ENCODE measurements at regions of chr6 and their contacts with region 1.

Region 1: DNA sequence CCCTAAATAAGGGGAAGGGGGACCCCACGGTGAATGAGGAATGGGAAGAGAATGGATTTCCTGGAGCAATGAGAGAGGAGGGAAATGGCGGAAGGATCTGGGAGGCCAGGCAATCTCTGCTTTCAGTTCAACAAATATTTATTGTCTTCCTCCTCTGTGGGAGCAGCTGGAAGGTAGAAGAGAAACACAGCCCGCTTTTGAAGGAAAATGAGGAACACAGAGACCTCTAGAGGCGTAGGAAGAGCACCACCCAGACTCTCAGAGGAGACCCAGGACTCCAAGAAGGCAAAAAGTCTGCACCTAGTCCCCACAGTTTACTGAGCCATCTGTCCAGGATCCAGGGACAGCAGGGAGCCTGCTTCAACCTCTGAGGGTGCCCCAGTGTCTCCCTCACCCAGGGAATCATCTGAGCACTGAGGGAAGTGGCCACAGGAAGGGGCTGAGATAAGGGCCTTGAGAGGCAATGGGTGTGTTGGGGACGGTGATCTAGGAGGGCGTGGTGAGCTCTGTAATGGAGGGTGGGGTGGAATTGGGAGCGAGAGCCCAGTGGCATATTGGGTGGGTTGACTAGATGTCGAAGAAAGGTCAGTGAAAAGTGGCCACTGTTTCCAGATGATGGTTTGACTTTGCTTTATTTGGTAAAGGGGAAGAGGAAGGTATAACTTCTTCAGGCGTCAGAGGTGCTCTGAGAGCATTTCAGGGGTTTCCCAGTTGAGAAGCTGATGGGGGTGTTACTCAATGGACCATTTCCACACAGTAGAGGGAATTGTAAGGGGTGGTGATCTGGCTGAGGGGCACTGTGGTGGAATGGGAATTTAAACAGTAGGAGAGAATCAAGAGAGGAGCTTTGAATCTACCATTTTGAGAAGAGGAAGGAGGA is 610 bp downstream of the PSORS1C1 start:
- DNase-seq: no peak
- H3K4me3 ChIP-seq: peak overlapping the region; percentile 36
- H3K27me3 ChIP-seq: 0 out of 2 replicates have a peak, but pooled peaks cover 2% of the 10 kb centered on the region
- CTCF ChIP-seq: peak; percentile 52

Region 2: GRCh38 chr6:30672445-30673253 is 442.6 kb before region 1 on chr6 and contains the start of gene DHX16:
- CTCF ChIA-PET with region 1: no interaction called
- POLR2A ChIA-PET with region 1: interaction called, 10 read pairs
- DNase-seq: peak; percentile 85
- H3K4me3 ChIP-seq: peak within 1 kb of the TSS; percentile 88
- H3K27me3 ChIP-seq: no peaks in the 10 kb centered on the region
- CTCF ChIP-seq: peak; percentile 88
- polyA plus RNA-seq, gene DHX16: 25.1 and 44.5 TPM in 2 replicates

Region 3: DNA sequence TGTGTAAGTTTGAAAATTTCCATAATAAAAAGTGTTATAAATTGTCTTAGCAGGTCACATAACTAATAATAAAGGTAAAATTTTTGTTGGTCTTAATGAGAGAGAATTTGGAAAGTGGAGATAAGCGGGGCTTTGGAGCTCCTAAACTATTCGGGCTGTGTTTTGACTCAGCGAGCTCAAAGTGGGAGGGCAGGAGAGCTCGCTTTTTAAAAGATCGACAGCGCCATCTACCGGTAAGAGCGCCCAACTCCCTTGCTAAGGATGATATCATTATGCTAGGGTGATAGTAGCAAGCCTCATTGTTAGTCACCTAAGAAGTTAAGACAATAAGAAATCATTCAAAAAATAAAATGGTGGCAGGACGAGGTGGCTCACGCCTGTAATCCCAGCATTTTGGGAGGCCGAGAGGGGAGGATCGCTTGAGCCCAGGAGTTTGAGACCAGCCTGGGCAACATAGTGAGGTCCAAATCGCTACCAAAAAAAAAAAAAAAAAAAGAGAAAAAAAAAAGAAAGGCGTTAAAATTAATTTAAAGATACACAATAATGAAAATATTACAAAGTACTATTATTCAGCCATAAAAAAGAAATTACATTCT is 27.6 kb before region 1 on chr6:
- CTCF ChIA-PET with region 1: interaction called, 20 read pairs
- POLR2A ChIA-PET with region 1: no interaction called
- DNase-seq: no peak
- H3K4me3 ChIP-seq: no peak overlapping the region
- H3K27me3 ChIP-seq: no peaks in the 10 kb centered on the region; the same call in 1 of the 2 replicates
- CTCF ChIP-seq: peak; percentile 69

Region 4: GRCh38 chr6:31103136-31103535 is 12.1 kb before region 1 on chr6:
- CTCF ChIA-PET with region 1: interaction called, 33 read pairs
- POLR2A ChIA-PET with region 1: no interaction called
- DNase-seq: no peak
- H3K4me3 ChIP-seq: no peak overlapping the region
- H3K27me3 ChIP-seq: no peaks in the 10 kb centered on the region; the same call in 1 of the 2 replicates
- CTCF ChIP-seq: no peak